ENCODE measurements at regions of chr3 and their contacts with region 1.

Region 1: GRCh38 chr3:189947948-189948723 is 172.6 kb downstream of the P3H2 start:
- H3K4me3 Mint-ChIP-seq: no peak overlapping the region
- H3K27ac Mint-ChIP-seq: no peak overlapping the region
- H3K4me1 Mint-ChIP-seq: no peaks in the 10 kb centered on the region
- H3K27me3 Mint-ChIP-seq: peaks cover 4% of the 10 kb centered on the region

Region 2: DNA sequence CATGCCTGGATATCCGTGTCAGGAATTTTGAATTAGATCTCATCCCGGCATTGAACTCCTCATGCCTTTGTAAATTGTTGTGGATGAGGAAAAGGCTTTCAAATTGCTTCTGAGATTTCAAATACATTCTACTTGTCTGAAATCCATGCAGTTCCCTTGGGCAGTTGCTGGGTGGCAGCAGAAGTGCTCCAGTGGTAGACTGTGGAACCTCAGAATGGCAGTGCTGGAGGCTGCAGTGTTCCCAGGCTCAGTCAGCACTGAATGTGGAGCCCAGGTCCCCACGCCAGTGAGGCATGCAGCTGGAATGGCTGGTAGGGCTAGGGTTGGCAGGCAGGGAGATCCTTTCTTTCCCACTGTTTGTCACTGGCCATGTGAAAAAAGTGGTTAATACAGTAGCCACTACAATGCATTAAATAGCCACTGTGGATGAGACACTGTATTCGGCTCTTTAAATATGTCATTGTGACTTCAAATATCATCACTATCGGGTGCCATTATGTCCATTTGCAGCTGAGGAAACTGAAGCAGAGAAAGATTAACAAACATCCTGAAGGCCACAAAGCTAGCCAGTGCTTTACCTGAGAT is 677.8 kb before region 1 on chr3:
- intact Hi-C with region 1: loop called (anchors 5 kb)
- H3K4me3 Mint-ChIP-seq: no peak overlapping the region
- H3K27ac Mint-ChIP-seq: no peak overlapping the region
- H3K4me1 Mint-ChIP-seq: peaks cover 3% of the 10 kb centered on the region
- H3K27me3 Mint-ChIP-seq: no peaks in the 10 kb centered on the region